ENCODE measurements at regions of chr5 and their contacts with region 1.

Region 1: DNA sequence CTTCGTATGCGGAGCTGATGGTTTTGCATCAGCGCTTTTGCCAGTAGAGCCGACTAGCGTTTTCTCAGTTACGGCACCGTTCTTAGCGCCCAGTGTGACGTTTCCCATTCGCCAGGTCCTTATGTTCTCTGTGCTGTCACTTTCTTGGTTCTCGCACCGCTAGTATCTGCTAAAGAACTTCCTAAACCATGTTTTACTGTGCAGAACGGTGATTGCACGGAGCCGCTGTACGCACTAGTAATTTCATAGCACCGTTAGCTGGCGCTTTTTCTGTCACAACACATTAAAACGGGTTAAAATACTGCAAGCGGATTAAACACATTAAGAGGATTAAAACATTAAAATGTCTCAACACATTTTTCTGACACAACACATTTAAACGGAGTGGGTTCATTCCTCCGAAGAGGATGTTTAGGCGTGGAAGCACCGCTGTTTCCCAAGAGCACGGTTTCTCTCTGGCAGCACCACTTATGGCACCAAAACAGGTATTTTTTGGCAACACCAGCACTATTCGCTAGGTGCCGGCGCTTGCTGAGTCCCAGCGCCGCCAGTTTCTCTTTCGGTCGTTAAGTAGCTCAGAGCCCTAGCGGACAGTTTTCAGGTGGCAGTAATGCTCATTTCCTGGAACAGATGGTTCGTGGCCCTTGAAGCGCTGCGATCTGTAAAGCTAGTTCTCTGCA is 20.4 kb downstream of the ANXA2R start:
- DNase-seq: peak; percentile 63 to 94 (median 88)
- ATAC-seq: peak; percentile 77
- H3K4me3 ChIP-seq: peak overlapping the region; percentile 76
- H3K4me3 Mint-ChIP-seq: peak overlapping the region; percentile 92 to 99 (median 98)
- H3K27ac ChIP-seq: peak overlapping the region; percentile 96
- H3K27ac Mint-ChIP-seq: peak overlapping the region; percentile 96 to 100 (median 99)
- H3K4me1 ChIP-seq: peaks cover 34 to 35% of the 10 kb centered on the region in 2 donors
- H3K4me1 Mint-ChIP-seq: peaks cover 20 to 52% (median 46%) of the 10 kb centered on the region in 7 donors
- H3K27me3 ChIP-seq: no peaks in the 10 kb centered on the region
- H3K27me3 Mint-ChIP-seq: no peaks in the 10 kb centered on the region

Region 2: GRCh38 chr5:42908509-42909488 is 111.0 kb before region 1 on chr5:
- CTCF ChIA-PET with region 1: interaction called, 30 read pairs
- POLR2A ChIA-PET with region 1: interaction called, 123 read pairs
- intact Hi-C with region 1: loop called (anchors 1 kb)
- DNase-seq: peak; percentile 76 to 93 (median 88)
- ATAC-seq: peak; percentile 92
- H3K4me3 ChIP-seq: peak overlapping the region; percentile 72
- H3K4me3 Mint-ChIP-seq: peak overlapping the region; percentile 89 to 98 (median 94)
- H3K27ac ChIP-seq: peak overlapping the region; percentile 76
- H3K27ac Mint-ChIP-seq: peak overlapping the region; percentile 64 to 97 (median 95)
- H3K4me1 ChIP-seq: peaks cover 0 to 4% of the 10 kb centered on the region in 2 donors
- H3K4me1 Mint-ChIP-seq: peaks cover 5 to 22% (median 19%) of the 10 kb centered on the region in 7 donors
- H3K27me3 ChIP-seq: no peaks in the 10 kb centered on the region
- H3K27me3 Mint-ChIP-seq: peaks cover 0 to 43% (median 0%) of the 10 kb centered on the region in 5 donors

Region 3: GRCh38 chr5:43008369-43009153 is 11.2 kb before region 1 on chr5:
- CTCF ChIA-PET with region 1: interaction called, 63 read pairs
- POLR2A ChIA-PET with region 1: interaction called, 1,009 read pairs
- intact Hi-C with region 1: loop called (anchors 1 kb)
- DNase-seq: peak; percentile 79 to 95 (median 90)
- ATAC-seq: peak; percentile 78
- H3K4me3 ChIP-seq: peak overlapping the region; percentile 72
- H3K4me3 Mint-ChIP-seq: peak overlapping the region; percentile 85 to 98 (median 92)
- H3K27ac ChIP-seq: peak overlapping the region; percentile 92
- H3K27ac Mint-ChIP-seq: peak overlapping the region; percentile 96 to 100 (median 98)
- H3K4me1 ChIP-seq: peaks cover 22 to 24% of the 10 kb centered on the region in 2 donors
- H3K4me1 Mint-ChIP-seq: peaks cover 17 to 47% (median 29%) of the 10 kb centered on the region in 7 donors
- H3K27me3 ChIP-seq: no peaks in the 10 kb centered on the region
- H3K27me3 Mint-ChIP-seq: peaks cover 0 to 4% (median 0%) of the 10 kb centered on the region in 5 donors

Region 4: DNA sequence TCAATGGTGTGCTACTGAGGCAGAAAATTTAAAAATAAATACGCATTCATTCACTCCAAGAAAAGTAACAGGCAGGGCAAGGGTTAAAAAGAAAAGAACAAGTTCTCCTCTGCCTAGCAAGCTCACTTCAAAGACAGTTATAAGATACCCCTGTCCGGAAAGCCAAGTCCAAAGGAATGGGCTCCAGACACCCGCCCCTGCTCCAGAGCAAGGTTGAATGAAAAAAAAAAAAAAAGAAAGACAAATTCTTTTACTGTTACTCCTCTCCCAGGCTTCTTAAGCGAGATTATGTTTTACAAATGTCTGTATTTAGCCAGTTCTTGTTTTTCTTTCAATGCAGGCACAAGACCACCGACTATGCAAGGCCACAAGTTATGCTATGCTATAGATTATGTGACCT is 29.5 kb after region 1 on chr5:
- CTCF ChIA-PET with region 1: no interaction called
- POLR2A ChIA-PET with region 1: interaction called, 1,055 read pairs
- intact Hi-C with region 1: no loop called
- DNase-seq: no peak
- ATAC-seq: no peak
- H3K4me3 ChIP-seq: no peak overlapping the region
- H3K4me3 Mint-ChIP-seq: no peak overlapping the region
- H3K27ac ChIP-seq: no peak overlapping the region
- H3K27ac Mint-ChIP-seq: peak overlapping the region in 1 of 9 donors; percentile 45
- H3K4me1 ChIP-seq: peaks cover 5 to 7% of the 10 kb centered on the region in 2 donors
- H3K4me1 Mint-ChIP-seq: peaks cover 9 to 40% (median 31%) of the 10 kb centered on the region in 7 donors
- H3K27me3 ChIP-seq: no peaks in the 10 kb centered on the region
- H3K27me3 Mint-ChIP-seq: no peaks in the 10 kb centered on the region

Region 5: DNA sequence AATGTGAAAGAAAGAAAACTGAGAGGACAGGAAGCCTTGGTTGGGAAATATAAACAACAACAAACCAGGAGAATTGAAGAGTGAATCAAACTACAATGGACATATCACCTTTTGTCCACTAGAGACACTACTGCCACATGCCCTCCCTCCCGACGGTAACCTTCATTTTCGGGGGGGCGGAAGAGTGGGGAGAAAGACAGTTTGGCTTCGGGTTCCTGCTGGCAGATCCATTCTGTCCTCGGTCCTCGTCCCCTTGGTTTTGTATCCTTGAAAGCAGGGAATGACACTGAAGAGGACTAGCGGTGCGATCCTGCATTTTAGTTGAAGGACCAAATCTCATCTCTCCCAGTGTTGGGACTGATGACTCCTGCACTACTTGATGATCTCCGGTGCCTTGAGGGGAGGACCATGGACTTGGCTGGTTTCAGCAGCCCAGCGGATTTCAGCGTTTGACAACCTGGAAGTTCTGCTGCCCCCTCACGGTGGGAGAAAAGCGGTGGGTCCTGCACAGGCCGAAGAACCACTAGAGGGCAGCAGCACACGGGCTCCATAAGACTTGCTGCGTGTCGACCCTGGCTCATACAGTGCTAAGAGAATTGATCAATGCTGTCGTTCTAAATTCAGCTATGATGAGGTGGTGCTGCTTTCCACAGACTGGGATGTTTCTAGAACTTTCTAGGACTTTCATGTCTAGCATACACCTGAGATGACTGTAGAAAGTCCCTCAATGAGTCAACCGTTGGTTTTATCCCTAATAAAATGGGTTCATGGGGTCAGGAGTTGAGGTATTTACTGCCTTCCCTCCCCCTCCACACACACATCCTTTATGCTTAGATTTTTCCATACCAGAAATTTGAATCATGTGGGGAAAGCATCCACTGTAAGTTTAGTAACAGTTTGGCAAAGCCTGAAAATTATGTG is 85.9 kb after region 1 on chr5:
- CTCF ChIA-PET with region 1: interaction called, 4 read pairs
- POLR2A ChIA-PET with region 1: interaction called, 13 read pairs
- intact Hi-C with region 1: loop called (anchors 1 kb)
- DNase-seq: peak; percentile 75 to 90 (median 85)
- ATAC-seq: peak; percentile 99
- H3K4me3 ChIP-seq: peak overlapping the region; percentile 66
- H3K4me3 Mint-ChIP-seq: peak overlapping the region; percentile 77 to 93 (median 89)
- H3K27ac ChIP-seq: peak overlapping the region; percentile 59
- H3K27ac Mint-ChIP-seq: peak overlapping the region; percentile 43 to 92 (median 88)
- H3K4me1 ChIP-seq: peaks cover 6 to 22% of the 10 kb centered on the region in 2 donors
- H3K4me1 Mint-ChIP-seq: peaks cover 21 to 49% (median 38%) of the 10 kb centered on the region in 7 donors
- H3K27me3 ChIP-seq: no peaks in the 10 kb centered on the region
- H3K27me3 Mint-ChIP-seq: no peaks in the 10 kb centered on the region

Region 6: GRCh38 chr5:43396762-43397304 is 377.1 kb after region 1 on chr5:
- CTCF ChIA-PET with region 1: no interaction called
- POLR2A ChIA-PET with region 1: interaction called, 10 read pairs
- intact Hi-C with region 1: no loop called
- DNase-seq: peak; percentile 42 to 74 (median 66)
- ATAC-seq: peak; percentile 96
- H3K4me3 ChIP-seq: peak overlapping the region; percentile 80
- H3K4me3 Mint-ChIP-seq: peak overlapping the region; percentile 88 to 100 (median 98)
- H3K27ac ChIP-seq: peak overlapping the region; percentile 76
- H3K27ac Mint-ChIP-seq: peak overlapping the region; percentile 93 to 99 (median 97)
- H3K4me1 ChIP-seq: peaks cover 3 to 7% of the 10 kb centered on the region in 2 donors
- H3K4me1 Mint-ChIP-seq: peaks cover 15 to 62% (median 41%) of the 10 kb centered on the region in 7 donors
- H3K27me3 ChIP-seq: no peaks in the 10 kb centered on the region
- H3K27me3 Mint-ChIP-seq: no peaks in the 10 kb centered on the region